Testis (tissue), 5 donors: ENCODE measurements at regions of chr16 and their contacts with region 1.

Region 1: GRCh38 chr16:14300705-14301168 is 229.6 kb downstream of the MRTFB start:
- DNase-seq: peak; percentile 89
- H3K4me3 ChIP-seq: peak overlapping the region in 1 of 2 donors; percentile 82
- H3K27ac ChIP-seq: peak overlapping the region; percentile 25 to 44
- H3K4me1 ChIP-seq: peaks cover 6% of the 10 kb centered on the region
- H3K27me3 ChIP-seq: no peaks in the 10 kb centered on the region
- CTCF ChIP-seq: peak; percentile 60 to 81 (median 61)
- POLR2A ChIP-seq: no peak

Region 2: GRCh38 chr16:14529010-14529669 is 228.4 kb after region 1 on chr16:
- intact Hi-C with region 1: loop called (anchors 5 kb)
- DNase-seq: peak; percentile 80
- H3K4me3 ChIP-seq: no peak overlapping the region
- H3K27ac ChIP-seq: no peak overlapping the region
- H3K4me1 ChIP-seq: peaks cover 7% of the 10 kb centered on the region
- H3K27me3 ChIP-seq: no peaks in the 10 kb centered on the region
- CTCF ChIP-seq: peak; percentile 63 to 92 (median 75)
- POLR2A ChIP-seq: no peak